ENCODE measurements at regions of chr15 and their contacts with region 1.

Region 1: DNA sequence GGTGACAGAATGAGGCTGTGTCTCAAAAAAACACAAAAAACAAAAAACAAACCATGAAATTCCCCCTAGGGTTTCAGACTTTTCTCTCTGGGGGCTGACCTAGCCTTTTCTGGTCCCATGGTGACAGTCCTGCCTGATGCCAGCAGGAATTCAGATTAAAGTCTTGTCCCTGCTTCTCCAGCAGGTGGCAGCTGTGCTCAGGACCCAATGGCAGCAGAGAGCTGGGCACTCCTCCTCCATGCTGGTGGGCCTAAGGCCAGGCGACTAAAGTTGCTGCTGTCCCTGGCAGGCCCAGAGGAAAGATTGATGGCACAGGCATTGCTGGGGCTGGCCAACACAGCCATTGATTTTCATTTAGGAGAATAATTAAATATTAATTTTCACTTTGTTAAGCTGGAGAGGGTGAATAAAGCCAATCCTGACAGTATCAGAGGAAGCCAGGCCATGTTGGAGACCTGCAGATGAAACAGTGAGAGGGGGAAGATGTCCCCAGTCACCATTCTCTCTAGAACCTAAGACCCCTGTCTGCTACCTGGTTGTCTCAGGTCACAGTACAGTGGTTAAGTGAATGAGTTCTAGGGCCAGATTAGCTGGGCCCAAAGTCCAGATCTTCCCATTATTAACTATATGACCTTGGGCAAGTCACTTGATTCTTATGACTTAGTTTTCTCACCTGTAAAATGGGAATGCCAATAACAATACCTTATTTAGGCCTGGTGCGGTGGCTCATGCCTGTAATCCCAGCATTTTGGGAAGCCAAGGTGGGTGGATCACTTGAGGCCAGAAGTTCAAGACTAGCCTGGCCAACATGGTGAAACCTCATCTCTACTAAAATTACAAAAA is 7.1 kb downstream of the CELF6 start:
- DNase-seq: peak; percentile 82 to 97
- ATAC-seq: peak; percentile 89 to 96
- H3K4me3 ChIP-seq: no peak overlapping the region
- H3K27ac ChIP-seq: no peak overlapping the region
- H3K4me1 ChIP-seq: no peaks in the 10 kb centered on the region
- CTCF ChIP-seq: peak; percentile 85
- EP300 ChIP-seq: no peak
- POLR2A ChIP-seq: no peak
- RAD21 ChIP-seq: peak; percentile 85 to 91

Region 2: DNA sequence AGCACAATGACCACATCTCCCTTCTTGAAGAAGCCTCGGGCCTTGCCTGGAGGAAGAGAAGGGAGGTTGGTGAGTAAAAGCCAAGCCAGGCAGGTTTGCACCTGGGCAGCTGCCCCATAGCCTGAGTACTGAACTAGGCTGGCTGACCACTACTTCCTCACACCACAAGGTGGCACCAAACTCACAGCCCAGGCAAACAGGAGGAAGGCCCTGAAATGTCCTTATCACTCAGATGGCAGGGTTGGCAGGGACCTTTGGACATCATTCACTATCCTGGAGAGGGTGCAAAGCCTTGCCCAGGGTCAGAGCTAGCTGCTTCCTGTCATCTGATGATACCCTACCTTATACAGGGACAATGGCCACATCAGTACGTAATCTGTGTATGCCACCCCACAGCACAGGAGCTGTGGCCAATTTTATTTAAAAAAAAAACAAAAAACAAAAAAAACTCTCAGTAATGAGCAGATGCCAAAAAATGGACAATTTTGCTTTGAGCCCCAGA is 113.1 kb before region 1 on chr15:
- CTCF ChIA-PET with region 1: interaction called, 11 read pairs
- POLR2A ChIA-PET with region 1: no interaction called
- DNase-seq: peak; percentile 89 to 93
- ATAC-seq: peak; percentile 33 to 68
- H3K4me3 ChIP-seq: no peak overlapping the region
- H3K27ac ChIP-seq: peak overlapping the region in 1 of 2 experiments; percentile 26; a peak in 3 of 6 replicates
- H3K4me1 ChIP-seq: peaks cover 54% of the 10 kb centered on the region
- CTCF ChIP-seq: peak; percentile 94
- EP300 ChIP-seq: no peak
- POLR2A ChIP-seq: no peak
- RAD21 ChIP-seq: peak; percentile 92 to 94

Region 3: GRCh38 chr15:72331021-72331420 is 18.2 kb after region 1 on chr15:
- CTCF ChIA-PET with region 1: interaction called, 23 read pairs
- POLR2A ChIA-PET with region 1: interaction called, 3 read pairs
- DNase-seq: no peak
- ATAC-seq: no peak; a peak in 1 of 6 replicates
- H3K4me3 ChIP-seq: no peak overlapping the region
- H3K27ac ChIP-seq: no peak overlapping the region
- H3K4me1 ChIP-seq: no peaks in the 10 kb centered on the region
- CTCF ChIP-seq: no peak
- EP300 ChIP-seq: no peak
- POLR2A ChIP-seq: no peak
- RAD21 ChIP-seq: no peak

Region 4: GRCh38 chr15:72339777-72340177 is 27.0 kb after region 1 on chr15:
- CTCF ChIA-PET with region 1: interaction called, 39 read pairs
- POLR2A ChIA-PET with region 1: no interaction called
- DNase-seq: peak; percentile 72 to 89
- ATAC-seq: peak; percentile 91 to 95
- H3K4me3 ChIP-seq: no peak overlapping the region
- H3K27ac ChIP-seq: peak overlapping the region; percentile 83 to 84
- H3K4me1 ChIP-seq: peaks cover 34% of the 10 kb centered on the region
- CTCF ChIP-seq: no peak
- EP300 ChIP-seq: peak in 1 of 2 experiments; percentile 41; a peak in 1 of 5 replicates
- POLR2A ChIP-seq: no peak
- RAD21 ChIP-seq: 0 out of 5 replicates have a peak, but pooled peaks of 1 of the 2 experiments have one; percentile 18

Region 5: DNA sequence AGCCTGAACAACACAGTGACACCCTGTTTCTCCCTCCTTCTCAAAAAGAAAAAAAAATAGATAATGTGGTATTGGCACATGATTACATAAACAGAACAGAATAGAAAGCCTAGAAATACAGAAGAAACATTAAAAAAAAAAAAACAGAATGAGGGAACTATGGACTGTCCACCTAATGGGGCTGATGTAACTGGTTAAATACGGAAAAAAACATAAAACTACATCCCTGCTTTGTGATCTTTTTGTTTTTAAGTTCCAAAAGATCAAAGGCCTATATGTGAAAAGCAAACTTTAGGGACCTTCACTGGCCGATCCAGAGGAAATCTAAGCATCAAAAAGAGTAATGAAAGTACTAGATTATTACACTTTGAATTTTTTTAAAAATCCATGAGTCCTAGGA is 102.5 kb after region 1 on chr15:
- CTCF ChIA-PET with region 1: no interaction called
- POLR2A ChIA-PET with region 1: no interaction called
- DNase-seq: no peak
- ATAC-seq: no peak
- H3K4me3 ChIP-seq: no peak overlapping the region
- H3K27ac ChIP-seq: no peak overlapping the region
- H3K4me1 ChIP-seq: no peaks in the 10 kb centered on the region
- CTCF ChIP-seq: no peak
- EP300 ChIP-seq: no peak
- POLR2A ChIP-seq: no peak
- RAD21 ChIP-seq: no peak

Region 6: DNA sequence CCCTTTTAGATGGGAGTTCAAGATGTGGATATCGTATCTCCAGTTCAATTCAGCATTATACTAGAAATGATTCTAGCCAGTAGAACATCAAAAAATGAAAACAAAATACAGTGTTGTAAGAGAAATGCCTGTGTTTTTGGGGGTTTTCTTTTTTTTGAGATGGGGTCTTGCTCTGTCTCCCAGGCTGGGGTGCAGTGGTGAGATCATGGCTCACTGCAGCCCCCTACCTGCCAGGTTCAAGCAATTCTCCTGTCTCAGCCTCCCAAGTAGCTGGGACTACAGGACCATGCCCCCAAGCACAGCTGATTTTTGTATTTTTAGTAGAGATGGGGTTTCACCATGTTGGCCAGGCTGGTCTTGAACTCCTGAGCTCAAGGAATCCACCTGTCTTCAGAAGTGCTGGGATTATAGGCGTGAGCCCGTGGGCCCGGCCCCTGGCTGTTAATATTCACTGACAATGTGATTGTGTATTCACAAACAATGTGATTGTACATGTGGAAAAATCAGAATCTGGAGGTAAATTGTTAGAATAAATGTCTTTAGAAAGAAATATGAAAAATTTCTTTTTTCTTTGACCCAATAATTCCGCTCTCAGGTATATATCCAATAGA is 220.3 kb after region 1 on chr15:
- CTCF ChIA-PET with region 1: interaction called, 13 read pairs
- POLR2A ChIA-PET with region 1: no interaction called
- DNase-seq: peak in 1 of 2 experiments; percentile 26
- ATAC-seq: peak in 1 of 2 experiments; percentile 88; a peak in 3 of 6 replicates
- H3K4me3 ChIP-seq: no peak overlapping the region
- H3K27ac ChIP-seq: no peak overlapping the region
- H3K4me1 ChIP-seq: no peaks in the 10 kb centered on the region
- CTCF ChIP-seq: peak; percentile 59
- EP300 ChIP-seq: no peak
- POLR2A ChIP-seq: no peak
- RAD21 ChIP-seq: peak; percentile 62 to 64

Measured in A549 (cell line).